Activated CD4-positive, alpha-beta T cell treated with anti-CD3 and anti-CD28 coated beads for 36 hours (primary cell): ENCODE measurements at regions of chr13 and their contacts with region 1.

Region 1: DNA sequence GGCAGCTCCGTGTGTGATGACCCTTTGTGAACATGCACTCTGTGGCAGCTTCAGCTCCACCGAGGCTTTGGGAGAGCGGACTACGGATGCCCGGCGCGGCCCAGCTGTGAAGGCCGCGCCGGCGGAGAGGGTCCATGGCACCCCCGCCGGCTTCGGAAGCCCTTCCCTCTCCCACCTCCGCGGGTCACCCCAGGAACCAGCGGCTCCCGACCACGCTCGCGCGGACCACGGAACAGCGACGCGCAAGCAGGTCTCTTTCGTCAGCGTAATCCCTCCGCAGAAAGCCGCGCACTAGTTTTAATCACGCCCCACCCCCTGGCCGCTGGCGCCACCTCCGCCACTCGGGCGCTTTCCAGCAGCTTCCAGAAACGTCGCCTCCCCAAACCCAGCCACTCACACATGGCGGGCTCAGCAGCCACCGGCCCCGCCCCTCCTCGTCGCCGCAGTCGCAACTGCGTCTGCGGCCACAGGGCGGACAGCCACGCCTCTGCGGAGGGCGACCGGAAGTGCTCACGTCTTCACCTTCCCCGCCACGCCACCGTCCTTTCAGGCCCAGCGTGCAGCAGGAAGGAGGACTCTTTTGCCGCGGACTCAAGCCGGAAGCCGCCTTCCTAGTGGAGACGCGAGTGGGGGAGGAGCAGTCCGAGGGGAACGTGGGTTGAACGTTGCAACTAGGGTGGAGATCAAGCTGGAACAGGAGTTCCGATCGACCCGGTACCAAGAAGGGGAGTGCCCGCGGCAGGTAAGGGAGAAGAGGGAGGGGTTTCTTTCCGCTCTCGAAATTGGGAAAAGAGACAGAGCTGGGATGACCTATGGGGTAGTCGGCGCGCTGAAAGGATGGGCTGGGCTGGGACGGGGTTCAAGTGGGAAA is at the start of gene USPL1:
- DNase-seq: peak; percentile 99
- ATAC-seq: peak; percentile 92
- H3K4me3 Mint-ChIP-seq: no peak within 1 kb of the TSS
- H3K27ac Mint-ChIP-seq: no peak within 1 kb of the TSS
- H3K4me1 Mint-ChIP-seq: peaks cover 31% of the 10 kb centered on the region
- H3K27me3 Mint-ChIP-seq: no peaks in the 10 kb centered on the region
- total RNA-seq, gene USPL1: 14.8 to 16.9 TPM

Region 2: DNA sequence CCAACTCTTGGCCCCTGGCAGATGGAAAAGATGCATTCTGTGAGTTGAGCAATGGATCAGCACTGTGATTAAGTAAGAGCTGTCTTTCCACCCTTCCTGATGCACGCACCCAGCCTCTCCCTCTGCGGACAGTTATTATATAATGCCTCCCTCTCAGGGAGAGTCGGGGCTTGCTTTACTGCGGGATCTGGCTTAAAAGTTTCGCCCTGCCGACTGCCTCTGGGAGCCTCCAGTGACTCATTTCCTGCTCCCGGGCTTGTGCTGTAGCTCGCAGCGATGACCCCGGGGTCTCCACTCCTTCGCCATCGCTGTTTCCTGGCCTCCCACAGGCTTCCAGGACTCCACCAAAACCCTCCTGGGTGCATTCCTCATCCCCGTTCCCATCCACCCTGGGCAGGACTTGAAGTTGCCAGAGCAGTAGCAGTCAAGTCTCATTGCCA is 914.6 kb before region 1 on chr13:
- CTCF ChIA-PET with region 1: no interaction called
- POLR2A ChIA-PET with region 1: no interaction called
- intact Hi-C with region 1: no loop called
- DNase-seq: no peak
- ATAC-seq: no peak
- H3K4me3 Mint-ChIP-seq: no peak overlapping the region
- H3K27ac Mint-ChIP-seq: no peak overlapping the region
- H3K4me1 Mint-ChIP-seq: no peaks in the 10 kb centered on the region
- H3K27me3 Mint-ChIP-seq: peaks cover 14% of the 10 kb centered on the region

Region 3: DNA sequence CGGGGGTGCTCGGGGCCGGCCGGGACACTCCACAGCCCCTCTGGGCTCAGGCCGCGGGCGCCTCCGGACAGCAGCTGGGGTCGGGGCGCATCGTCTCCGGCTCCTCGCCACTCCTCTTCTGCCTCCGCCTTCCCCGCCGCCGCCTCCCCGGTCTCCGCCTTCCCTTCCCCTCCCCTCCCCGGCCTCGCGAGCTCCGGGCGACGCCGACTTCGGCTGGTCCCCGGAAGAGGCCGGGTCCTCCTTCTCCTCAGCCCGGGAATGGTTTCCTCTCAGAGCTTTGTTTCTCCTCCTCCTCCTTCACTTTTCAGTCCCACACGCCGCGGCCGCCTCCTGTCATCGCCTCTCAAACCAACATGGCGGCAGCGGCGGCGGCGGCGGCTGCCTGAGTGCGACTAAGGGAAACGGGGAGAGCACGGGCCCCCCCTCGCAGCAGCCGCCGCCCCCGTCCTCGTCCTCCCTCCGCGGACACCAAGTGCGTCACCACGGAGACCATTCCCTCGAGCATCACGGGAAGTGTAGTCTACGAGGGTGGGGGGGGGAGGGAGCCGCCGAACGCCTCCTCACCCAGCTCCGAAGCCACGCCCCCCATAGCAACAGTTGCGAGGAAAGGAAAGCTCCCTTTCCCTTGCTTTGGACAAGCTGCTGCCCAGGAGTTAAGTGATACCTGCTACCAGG is 767.2 kb before region 1 on chr13 and contains the start of gene UBL3:
- CTCF ChIA-PET with region 1: no interaction called
- POLR2A ChIA-PET with region 1: no interaction called
- intact Hi-C with region 1: loop called (anchors 1 to 5 kb)
- DNase-seq: peak; percentile 98
- ATAC-seq: peak; percentile 86
- H3K4me3 Mint-ChIP-seq: peak within 1 kb of the TSS; percentile 90
- H3K27ac Mint-ChIP-seq: peak within 1 kb of the TSS; percentile 98
- H3K4me1 Mint-ChIP-seq: peaks cover 42% of the 10 kb centered on the region
- H3K27me3 Mint-ChIP-seq: no peaks in the 10 kb centered on the region
- total RNA-seq, gene UBL3: 9.1 to 10.7 TPM

Region 4: GRCh38 chr13:30306762-30307193 is 310.8 kb before region 1 on chr13:
- CTCF ChIA-PET with region 1: no interaction called
- POLR2A ChIA-PET with region 1: interaction called, 4 read pairs
- intact Hi-C with region 1: loop called (anchors 1 to 2 kb)
- DNase-seq: peak; percentile 95
- ATAC-seq: peak; percentile 91
- H3K4me3 Mint-ChIP-seq: peak overlapping the region; percentile 80
- H3K27ac Mint-ChIP-seq: peak overlapping the region; percentile 79
- H3K4me1 Mint-ChIP-seq: peaks cover 31% of the 10 kb centered on the region
- H3K27me3 Mint-ChIP-seq: no peaks in the 10 kb centered on the region

Region 5: GRCh38 chr13:30422054-30422839 is 195.3 kb before region 1 on chr13 and contains the start of gene UBE2L5:
- CTCF ChIA-PET with region 1: no interaction called
- POLR2A ChIA-PET with region 1: no interaction called
- intact Hi-C with region 1: loop called in 1 of 2 experiments (anchors 1 kb)
- DNase-seq: peak; percentile 85
- ATAC-seq: peak; percentile 96
- H3K4me3 Mint-ChIP-seq: peak within 1 kb of the TSS; percentile 77
- H3K27ac Mint-ChIP-seq: peak within 1 kb of the TSS; percentile 69
- H3K4me1 Mint-ChIP-seq: peaks cover 12% of the 10 kb centered on the region
- H3K27me3 Mint-ChIP-seq: no peaks in the 10 kb centered on the region
- total RNA-seq, gene UBE2L5: 0.11 TPM in 1 of 2 experiments, not detected in the other

Region 6: GRCh38 chr13:30739761-30740642 is 122.5 kb after region 1 on chr13:
- CTCF ChIA-PET with region 1: interaction called, 3 read pairs
- POLR2A ChIA-PET with region 1: interaction called, 3 read pairs
- intact Hi-C with region 1: loop called (anchors 1 kb)
- DNase-seq: peak; percentile 83
- ATAC-seq: peak; percentile 76
- H3K4me3 Mint-ChIP-seq: peak overlapping the region; percentile 68
- H3K27ac Mint-ChIP-seq: peak overlapping the region; percentile 87
- H3K4me1 Mint-ChIP-seq: peaks cover 81% of the 10 kb centered on the region
- H3K27me3 Mint-ChIP-seq: peaks cover 2% of the 10 kb centered on the region